Dendritic cell treated with granulocyte-macrophage colony-stimulating factor and Interleukin-4, amounts not matched to agents 40 ng/mL and 50 ng/mL, for 4 days (primary cell): ENCODE measurements at regions of chr4 and their contacts with region 1.

Region 1: GRCh38 chr4:122356317-122356808 is 22.4 kb upstream of the ADAD1 start:
- H3K4me3 Mint-ChIP-seq: no peak overlapping the region
- H3K27ac Mint-ChIP-seq: no peak overlapping the region
- H3K4me1 Mint-ChIP-seq: no peaks in the 10 kb centered on the region
- H3K27me3 Mint-ChIP-seq: no peaks in the 10 kb centered on the region

Region 2: DNA sequence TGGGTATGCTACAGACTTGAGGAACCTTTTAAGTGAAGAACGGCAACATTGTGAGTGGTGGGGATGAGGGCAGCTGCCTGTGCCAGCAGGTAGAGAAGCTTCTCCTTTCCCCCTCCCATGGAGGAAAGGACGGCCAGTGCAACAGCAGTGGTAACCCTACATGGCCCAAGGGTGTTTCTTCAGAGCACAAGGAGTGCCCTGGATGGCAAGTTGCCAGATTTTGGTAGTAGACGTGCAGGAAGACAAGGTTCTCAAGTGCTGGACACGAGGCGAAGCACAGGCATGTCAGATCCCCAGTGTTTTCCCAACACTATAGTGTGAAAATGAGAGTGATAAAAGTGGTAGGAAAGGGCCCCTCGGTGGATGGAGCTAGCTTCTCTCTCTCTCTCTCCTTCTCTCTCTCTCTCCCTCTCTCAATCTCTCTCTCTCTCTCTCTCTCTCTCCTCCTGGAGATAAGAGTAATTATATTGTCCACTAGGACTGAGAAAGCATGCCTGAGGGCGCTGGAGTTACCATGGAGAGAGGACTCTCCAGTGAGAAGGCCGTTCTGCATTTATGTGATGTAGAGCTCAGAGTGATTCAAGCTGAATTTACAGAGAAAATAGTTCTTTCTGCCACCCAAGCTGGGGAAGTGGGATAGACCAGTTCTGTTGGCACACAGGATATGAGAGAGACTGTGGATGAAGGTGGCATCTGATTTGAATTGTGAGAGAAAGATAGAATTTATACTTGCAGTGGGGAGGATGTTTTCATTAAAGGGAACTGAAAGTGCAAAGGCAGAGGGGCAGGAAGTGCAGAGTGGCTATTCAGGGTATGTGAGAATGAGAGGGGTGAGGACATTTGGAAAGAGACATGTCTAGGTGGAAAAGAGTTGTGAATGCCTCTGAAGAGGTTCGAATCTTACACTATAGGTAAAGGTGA is 378.9 kb before region 1 on chr4:
- intact Hi-C with region 1: no loop called
- H3K4me3 Mint-ChIP-seq: no peak overlapping the region
- H3K27ac Mint-ChIP-seq: no peak overlapping the region
- H3K4me1 Mint-ChIP-seq: peaks cover 16% of the 10 kb centered on the region
- H3K27me3 Mint-ChIP-seq: peaks cover 3% of the 10 kb centered on the region

Region 3: DNA sequence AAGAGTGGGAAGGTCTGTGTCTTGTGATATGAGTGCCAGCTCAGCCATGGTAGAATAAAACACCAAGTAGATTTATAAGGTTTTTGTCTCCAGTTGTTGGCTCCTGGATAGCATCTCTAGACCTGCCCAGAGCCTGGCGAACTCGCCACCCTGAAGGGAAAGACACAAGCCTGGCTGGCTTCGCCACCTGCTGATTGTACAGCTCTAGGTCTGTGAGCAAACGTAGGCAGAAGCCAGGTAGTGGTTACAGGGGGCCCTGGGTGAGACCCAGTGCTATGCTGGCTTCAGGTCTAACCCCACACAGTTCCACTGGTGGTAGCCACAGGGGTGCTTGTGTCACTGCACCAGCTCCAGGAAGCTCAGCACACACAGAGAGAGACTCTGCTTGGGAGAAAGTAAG is 103.8 kb before region 1 on chr4:
- intact Hi-C with region 1: loop called (anchors 10 kb)
- H3K4me3 Mint-ChIP-seq: no peak overlapping the region
- H3K27ac Mint-ChIP-seq: no peak overlapping the region
- H3K4me1 Mint-ChIP-seq: no peaks in the 10 kb centered on the region
- H3K27me3 Mint-ChIP-seq: no peaks in the 10 kb centered on the region

Region 4: GRCh38 chr4:122625156-122625555 is 268.8 kb after region 1 on chr4:
- intact Hi-C with region 1: no loop called
- H3K4me3 Mint-ChIP-seq: no peak overlapping the region
- H3K27ac Mint-ChIP-seq: no peak overlapping the region
- H3K4me1 Mint-ChIP-seq: peaks cover 5% of the 10 kb centered on the region
- H3K27me3 Mint-ChIP-seq: no peaks in the 10 kb centered on the region